CD8-positive, alpha-beta memory T cell (primary cell): ENCODE measurements at regions of chr13 and their contacts with region 1.

Region 1: DNA sequence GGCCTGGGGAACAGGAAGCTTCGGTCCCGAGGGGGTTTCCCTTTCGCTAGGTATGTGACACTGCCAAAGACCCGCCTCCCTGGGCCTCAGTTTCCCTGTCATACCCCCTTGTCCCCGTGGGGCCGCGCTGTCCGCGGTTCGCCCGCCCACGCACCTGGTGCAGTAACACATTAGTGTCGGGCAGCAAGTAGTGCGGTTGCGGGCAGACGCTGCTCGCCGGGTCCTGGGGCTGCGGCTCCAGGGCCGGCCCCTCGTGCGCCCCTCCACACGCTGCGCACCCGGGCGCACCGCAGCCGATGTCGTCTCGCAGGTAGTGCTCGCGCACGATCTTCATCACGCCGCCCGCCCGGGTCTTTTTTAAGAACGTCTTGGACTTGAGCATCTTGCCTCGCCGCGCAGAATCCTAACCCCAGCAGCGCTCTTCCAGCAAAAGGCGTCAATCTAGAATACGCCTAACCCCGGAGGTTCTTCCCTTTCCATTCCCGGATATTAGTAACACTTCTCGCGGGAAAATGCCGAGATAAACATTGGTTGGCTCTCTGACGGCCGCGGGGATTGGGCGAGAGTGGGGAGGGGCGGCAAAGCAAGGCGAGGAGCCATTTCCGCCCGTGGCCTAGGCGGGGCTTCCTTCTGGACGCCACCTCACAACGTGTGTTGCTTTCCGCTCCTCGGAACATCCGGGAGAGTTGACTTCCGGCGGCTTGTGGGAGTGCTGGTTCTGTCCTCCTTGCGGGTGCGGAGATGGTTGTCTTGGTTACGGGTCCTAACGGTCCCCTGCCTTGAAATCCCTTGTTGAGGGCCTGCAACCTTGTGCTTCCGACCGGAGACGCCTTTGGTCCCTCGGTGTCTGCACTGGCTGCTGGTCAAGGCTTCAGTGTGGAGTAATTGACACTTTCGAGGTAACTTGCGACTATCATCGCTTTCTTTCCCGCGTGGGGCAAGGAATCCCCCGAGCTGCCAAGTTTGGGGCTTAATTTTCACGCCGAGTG is at the starts of genes DIS3 and PIBF1:
- DNase-seq: peak; percentile 94 to 96 (median 95)
- H3K4me3 ChIP-seq: peak within 1 kb of the TSS; percentile 89
- H3K4me3 Mint-ChIP-seq: peak within 1 kb of the TSS; percentile 91 to 100 (median 99)
- H3K27ac ChIP-seq: peak within 1 kb of the TSS; percentile 89
- H3K27ac Mint-ChIP-seq: peak within 1 kb of the TSS; percentile 79 to 100 (median 98)
- H3K4me1 ChIP-seq: peaks cover 51% of the 10 kb centered on the region
- H3K4me1 Mint-ChIP-seq: peaks cover 65 to 83% (median 79%) of the 10 kb centered on the region in 3 donors
- H3K27me3 ChIP-seq: no peaks in the 10 kb centered on the region
- H3K27me3 Mint-ChIP-seq: peaks cover 0 to 2% of the 10 kb centered on the region in 2 donors
- total RNA-seq, gene DIS3: 57.0 to 58.1 TPM
- total RNA-seq, gene PIBF1: 20.2 to 21.7 TPM

Region 2: GRCh38 chr13:72727417-72728289 is 54.1 kb before region 1 on chr13 and contains the starts of genes BORA and MZT1:
- CTCF ChIA-PET with region 1: interaction called, 3 read pairs
- POLR2A ChIA-PET with region 1: interaction called, 13 read pairs
- DNase-seq: peak; percentile 89 to 96 (median 94)
- H3K4me3 ChIP-seq: peak within 1 kb of the TSS; percentile 83
- H3K4me3 Mint-ChIP-seq: peak within 1 kb of the TSS; percentile 91 to 97 (median 94)
- H3K27ac ChIP-seq: peak within 1 kb of the TSS; percentile 80
- H3K27ac Mint-ChIP-seq: peak within 1 kb of the TSS; percentile 78 to 94 (median 88)
- H3K4me1 ChIP-seq: peaks cover 24% of the 10 kb centered on the region
- H3K4me1 Mint-ChIP-seq: peaks cover 48 to 77% (median 68%) of the 10 kb centered on the region in 3 donors
- H3K27me3 ChIP-seq: no peaks in the 10 kb centered on the region
- H3K27me3 Mint-ChIP-seq: peaks cover 0 to 2% of the 10 kb centered on the region in 2 donors
- total RNA-seq, gene BORA: 10.7 to 12.1 TPM
- total RNA-seq, gene MZT1: 26.3 to 30.6 TPM

Region 3: DNA sequence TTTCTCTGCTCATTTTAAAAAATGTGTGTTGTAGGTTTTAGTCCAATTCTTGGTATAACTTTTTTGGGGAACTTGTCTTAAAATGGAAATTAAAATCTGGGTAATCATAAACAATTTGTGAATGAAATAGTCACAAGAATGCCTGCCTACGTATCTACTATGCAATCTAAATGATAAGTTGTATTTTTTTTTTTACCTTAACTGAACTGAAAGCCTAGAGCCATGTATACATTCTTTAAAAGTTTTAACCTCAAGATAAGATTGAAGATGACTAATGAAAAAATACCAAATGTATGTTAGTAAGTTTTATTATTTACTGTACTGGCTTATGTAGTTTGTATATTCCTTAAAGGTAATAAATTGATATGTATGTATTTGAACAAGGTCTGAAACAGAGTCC is 44.7 kb after region 1 on chr13:
- CTCF ChIA-PET with region 1: no interaction called
- POLR2A ChIA-PET with region 1: no interaction called
- DNase-seq: no peak
- H3K4me3 ChIP-seq: no peak overlapping the region
- H3K4me3 Mint-ChIP-seq: no peak overlapping the region
- H3K27ac ChIP-seq: no peak overlapping the region
- H3K27ac Mint-ChIP-seq: peak overlapping the region in 1 of 8 donors; percentile 41
- H3K4me1 ChIP-seq: no peaks in the 10 kb centered on the region
- H3K4me1 Mint-ChIP-seq: peaks cover 34 to 43% (median 36%) of the 10 kb centered on the region in 3 donors
- H3K27me3 ChIP-seq: no peaks in the 10 kb centered on the region
- H3K27me3 Mint-ChIP-seq: no peaks in the 10 kb centered on the region